HCT116 (cell line): ENCODE measurements at regions of chr11 and their contacts with region 1.

Region 1: GRCh38 chr11:110376711-110377324 is 52.9 kb upstream of the FDX1 start:
- DNase-seq: peak; percentile 85
- ATAC-seq: peak; percentile 94
- H3K4me3 ChIP-seq: peak overlapping the region; percentile 27 to 33; a peak in 3 of 4 replicates
- H3K27ac ChIP-seq: peak overlapping the region; percentile 21; the same call in 1 of the 2 replicates
- H3K4me1 ChIP-seq: peaks cover 8% of the 10 kb centered on the region in 2 experiments; a peak in 3 of 4 replicates
- H3K27me3 ChIP-seq: no peaks in the 10 kb centered on the region
- CTCF ChIP-seq: peak; percentile 79 to 93 (median 92)
- POLR2A ChIP-seq: no peak
- RAD21 ChIP-seq: peak; percentile 94

Region 2: GRCh38 chr11:110092515-110093404 is 284.1 kb before region 1 on chr11 and contains the start of gene ZC3H12C:
- CTCF ChIA-PET with region 1: interaction called, 3 read pairs
- POLR2A ChIA-PET with region 1: no interaction called
- RAD21 ChIA-PET with region 1: no interaction called
- intact Hi-C with region 1: loop called (anchors 10 kb)
- DNase-seq: peak; percentile 77
- ATAC-seq: peak; percentile 79
- H3K4me3 ChIP-seq: peak within 1 kb of the TSS; percentile 69 to 74
- H3K27ac ChIP-seq: peak within 1 kb of the TSS; percentile 89
- H3K4me1 ChIP-seq: peaks cover 22 to 36% of the 10 kb centered on the region in 2 experiments
- H3K27me3 ChIP-seq: no peaks in the 10 kb centered on the region
- CTCF ChIP-seq: peak in 1 of 3 experiments; percentile 41; a peak in 1 of 6 replicates
- POLR2A ChIP-seq: no peak
- RAD21 ChIP-seq: peak; percentile 22; the same call in 1 of the 2 replicates
- total RNA-seq, gene ZC3H12C: 10.2 TPM

Region 3: DNA sequence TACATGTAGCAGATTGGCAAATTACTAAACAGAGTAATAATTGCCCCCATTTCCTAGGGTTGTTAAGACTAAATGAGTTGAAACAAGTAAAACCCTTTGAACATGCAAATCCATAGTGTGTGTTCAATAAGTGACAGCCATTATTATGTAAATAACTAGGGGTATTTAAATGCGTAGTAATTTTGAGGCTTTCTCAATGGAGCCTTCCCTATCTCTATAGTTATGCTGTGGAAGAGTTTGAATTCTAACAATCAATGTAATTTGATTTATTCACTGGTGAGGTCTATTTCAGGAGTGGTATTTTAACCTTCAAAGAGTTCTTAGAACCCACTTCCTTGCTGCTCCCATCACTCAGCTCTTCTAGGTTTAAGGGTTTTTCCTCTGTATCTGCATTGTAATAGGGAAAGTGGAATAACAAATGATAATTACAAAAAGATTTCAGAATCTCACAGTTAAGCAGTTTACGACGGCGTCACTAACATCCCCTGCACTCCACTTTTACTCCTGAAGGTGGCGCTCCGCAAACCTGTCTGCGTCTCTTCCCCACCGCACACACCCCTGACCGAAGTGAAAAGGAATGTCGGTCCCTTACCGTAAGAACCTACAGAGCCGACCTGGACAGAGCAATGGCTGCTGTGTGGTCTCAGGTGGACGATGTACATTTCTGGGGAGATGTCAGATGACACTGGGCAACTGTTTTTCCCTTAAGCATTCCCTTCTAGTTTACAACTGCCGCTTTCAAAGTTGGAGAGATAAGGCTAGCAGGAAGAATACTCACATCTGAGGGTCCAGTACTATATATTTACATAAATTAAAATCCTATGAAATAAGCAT is 202.8 kb before region 1 on chr11:
- CTCF ChIA-PET with region 1: no interaction called
- POLR2A ChIA-PET with region 1: no interaction called
- RAD21 ChIA-PET with region 1: no interaction called
- intact Hi-C with region 1: loop called (anchors 1 kb)
- DNase-seq: peak; percentile 54
- ATAC-seq: peak; percentile 93
- H3K4me3 ChIP-seq: no peak overlapping the region
- H3K27ac ChIP-seq: no peak overlapping the region
- H3K4me1 ChIP-seq: peaks cover 8 to 22% of the 10 kb centered on the region in 2 experiments; a peak in 3 of 4 replicates
- H3K27me3 ChIP-seq: no peaks in the 10 kb centered on the region
- CTCF ChIP-seq: peak; percentile 54 to 91 (median 88); a peak in 5 of 6 replicates
- POLR2A ChIP-seq: no peak
- RAD21 ChIP-seq: peak; percentile 72